ENCODE measurements at regions of chr13 and their contacts with region 1.

Region 1: GRCh38 chr13:35164324-35164932 is 222.4 kb downstream of the NBEA start:
- DNase-seq: peak; percentile 56
- H3K4me3 ChIP-seq: no peak overlapping the region
- H3K27ac ChIP-seq: no peak overlapping the region
- H3K4me1 ChIP-seq: no peaks in the 10 kb centered on the region
- CTCF ChIP-seq: peak; percentile 92

Region 2: DNA sequence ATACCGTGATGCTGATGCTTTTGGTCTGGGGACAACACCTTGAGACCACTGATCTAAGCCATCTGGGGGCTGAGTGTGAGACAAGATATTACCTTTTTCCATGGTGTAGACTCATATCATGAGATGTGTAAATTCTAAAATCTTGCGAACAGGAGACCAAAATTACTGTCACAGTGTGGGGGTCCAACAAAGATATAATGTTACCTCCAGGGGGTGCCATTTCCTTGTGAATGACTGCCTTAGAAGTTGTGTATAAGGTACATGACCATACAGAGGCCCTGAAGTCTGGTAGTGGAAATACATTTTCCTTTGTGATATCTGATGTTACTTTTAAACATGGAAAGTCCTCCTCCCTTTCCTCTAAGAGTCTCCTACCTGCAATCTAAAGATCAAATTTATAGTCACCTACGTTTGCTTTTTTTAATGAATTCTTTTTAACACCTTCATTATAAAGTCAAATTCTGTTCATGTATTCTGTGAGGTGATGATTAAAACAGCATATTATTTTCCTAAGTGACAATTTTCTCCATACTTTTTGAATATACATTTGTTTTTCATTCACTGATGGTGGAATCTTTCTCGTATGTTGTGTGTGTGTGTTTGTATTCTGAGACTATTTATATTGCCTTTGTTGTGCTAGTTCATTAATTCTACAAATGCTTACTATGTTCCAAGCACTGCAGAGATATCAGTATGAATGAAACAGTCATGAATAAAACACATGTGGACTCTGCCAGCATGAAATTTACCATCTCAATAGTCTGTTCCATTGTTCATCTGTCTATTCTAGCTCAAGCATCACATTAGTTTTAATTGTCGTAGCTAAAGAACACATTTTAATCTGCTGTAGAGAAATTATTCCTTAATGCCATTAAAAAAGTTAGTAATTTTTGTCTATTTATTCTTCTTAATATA is 1232.8 kb before region 1 on chr13:
- CTCF ChIA-PET with region 1: no interaction called
- POLR2A ChIA-PET with region 1: no interaction called
- intact Hi-C with region 1: loop called (anchors 1 kb)
- DNase-seq: peak; percentile 73
- H3K4me3 ChIP-seq: no peak overlapping the region
- H3K27ac ChIP-seq: no peak overlapping the region
- H3K4me1 ChIP-seq: no peaks in the 10 kb centered on the region
- CTCF ChIP-seq: peak; percentile 85

Region 3: DNA sequence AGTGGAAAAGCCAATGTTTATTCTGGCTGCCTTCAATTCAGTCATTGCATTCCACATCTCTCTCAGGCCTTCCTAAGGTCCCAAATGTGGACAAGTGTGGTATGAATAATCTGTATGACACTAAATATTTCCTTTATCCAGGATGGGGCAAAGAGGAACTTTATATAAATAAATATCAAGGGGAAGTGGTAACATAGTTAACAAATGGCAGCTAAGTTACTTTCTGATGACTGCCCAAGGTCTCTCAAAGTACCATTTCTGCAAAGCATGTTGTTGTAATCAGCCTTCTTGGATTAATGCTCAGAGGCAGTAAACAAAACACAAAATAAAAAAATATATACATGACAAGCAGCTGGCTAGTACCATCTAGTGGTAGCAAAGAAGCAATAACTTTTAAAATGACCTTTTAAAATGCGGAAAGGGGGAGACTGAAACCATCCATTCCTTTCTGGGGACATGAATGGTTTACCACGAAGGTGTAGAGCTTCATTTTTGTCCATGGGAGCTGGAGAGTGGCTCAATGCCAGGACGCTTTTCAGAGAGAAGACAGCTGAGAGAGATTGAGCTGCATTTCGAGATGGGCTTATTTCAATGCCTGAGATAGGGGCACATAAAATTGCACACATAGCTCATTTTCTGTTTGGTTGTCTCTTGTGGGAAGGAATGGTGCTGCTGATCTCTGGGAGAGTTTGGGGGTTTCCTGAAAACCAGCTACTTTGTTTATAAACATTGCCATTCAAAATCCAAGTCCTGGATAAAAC is 1087.3 kb before region 1 on chr13:
- CTCF ChIA-PET with region 1: no interaction called
- POLR2A ChIA-PET with region 1: no interaction called
- intact Hi-C with region 1: loop called (anchors 2 kb)
- DNase-seq: peak; percentile 62
- H3K4me3 ChIP-seq: no peak overlapping the region
- H3K27ac ChIP-seq: no peak overlapping the region
- H3K4me1 ChIP-seq: peaks cover 9% of the 10 kb centered on the region
- CTCF ChIP-seq: peak; percentile 93

Region 4: GRCh38 chr13:35055705-35056104 is 108.7 kb before region 1 on chr13:
- CTCF ChIA-PET with region 1: no interaction called
- POLR2A ChIA-PET with region 1: no interaction called
- intact Hi-C with region 1: no loop called
- DNase-seq: no peak
- H3K4me3 ChIP-seq: no peak overlapping the region
- H3K27ac ChIP-seq: no peak overlapping the region
- H3K4me1 ChIP-seq: no peaks in the 10 kb centered on the region
- CTCF ChIP-seq: no peak

Region 5: DNA sequence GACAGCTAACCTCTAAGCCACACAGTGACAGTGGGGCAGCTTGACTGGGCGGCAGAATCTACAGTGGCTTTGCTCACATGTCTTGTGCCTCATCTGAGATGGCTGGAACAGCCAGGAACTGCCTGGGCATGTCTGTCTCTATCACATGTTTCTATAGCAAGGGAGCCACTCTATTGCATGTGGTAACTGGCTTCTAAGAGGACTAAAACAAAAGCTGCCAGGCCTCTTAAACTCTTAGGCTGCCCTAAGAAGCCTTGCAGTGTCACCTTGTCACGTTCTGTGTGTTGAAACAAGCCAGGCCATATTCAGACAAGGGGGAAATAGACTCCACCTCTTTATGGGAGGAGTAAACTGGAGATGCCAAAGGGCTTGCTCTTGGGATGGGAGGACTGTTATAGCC is 435.0 kb after region 1 on chr13:
- CTCF ChIA-PET with region 1: no interaction called
- POLR2A ChIA-PET with region 1: no interaction called
- intact Hi-C with region 1: no loop called
- DNase-seq: no peak
- H3K4me3 ChIP-seq: no peak overlapping the region
- H3K27ac ChIP-seq: no peak overlapping the region
- H3K4me1 ChIP-seq: no peaks in the 10 kb centered on the region
- CTCF ChIP-seq: no peak

Region 6: DNA sequence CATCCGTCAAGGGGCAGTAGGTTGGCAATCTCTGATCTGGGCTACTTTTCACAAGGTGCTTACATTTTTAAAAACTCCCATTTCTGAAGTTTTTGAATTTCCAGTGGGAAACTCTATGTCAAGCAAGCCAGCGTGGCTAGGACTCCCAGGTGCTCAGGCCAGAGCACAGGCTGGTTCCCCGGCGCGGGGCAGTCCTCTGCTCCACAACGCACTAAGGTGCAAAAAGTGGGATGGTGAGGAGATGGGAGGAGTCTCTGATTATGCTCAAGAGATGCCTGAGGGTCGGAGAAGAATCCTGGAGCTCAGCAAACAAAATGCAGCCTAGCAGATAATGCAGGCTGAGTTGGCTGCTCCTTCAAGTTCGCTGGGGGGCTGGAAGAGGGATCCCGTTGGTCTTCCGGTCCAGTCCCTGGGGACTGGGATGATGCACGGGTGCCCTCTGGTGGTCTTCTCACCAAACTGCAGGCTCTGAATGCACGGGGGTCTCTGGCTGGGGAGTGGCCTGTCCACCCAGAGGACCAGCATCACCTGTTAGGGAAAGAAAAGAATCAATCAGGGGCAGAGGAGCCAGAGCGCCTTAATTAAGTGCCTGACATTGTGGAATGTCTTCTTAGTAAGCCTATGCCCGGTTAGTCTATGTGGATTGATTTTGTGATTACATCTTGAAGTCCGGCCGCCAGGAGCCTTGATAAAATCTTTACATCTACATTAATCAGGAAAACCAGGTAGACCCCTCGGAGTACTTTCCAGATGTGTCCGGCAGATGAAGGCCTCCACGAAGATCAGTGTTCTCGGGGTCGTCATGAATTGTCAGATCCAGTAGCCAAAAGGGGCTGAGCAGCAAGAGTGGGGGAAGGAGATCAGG is 556.5 kb after region 1 on chr13:
- CTCF ChIA-PET with region 1: no interaction called
- POLR2A ChIA-PET with region 1: no interaction called
- intact Hi-C with region 1: loop called (anchors 10 kb)
- DNase-seq: peak; percentile 33
- H3K4me3 ChIP-seq: no peak overlapping the region
- H3K27ac ChIP-seq: no peak overlapping the region
- H3K4me1 ChIP-seq: no peaks in the 10 kb centered on the region
- CTCF ChIP-seq: peak; percentile 89